Lower leg skin (tissue), 4 donors: ENCODE measurements at regions of chr7 and their contacts with region 1.

Region 1: GRCh38 chr7:4681886-4682620 is at the start of gene FOXK1:
- DNase-seq: peak; percentile 45 to 93
- H3K4me3 ChIP-seq: peak within 1 kb of the TSS; percentile 71
- CTCF ChIP-seq: no peak
- POLR2A ChIP-seq: no peak
- total RNA-seq, gene FOXK1: 22.0 to 41.3 (median 30.3) TPM

Region 2: GRCh38 chr7:3092468-3092867 is 1589.6 kb before region 1 on chr7:
- intact Hi-C with region 1: no loop called
- DNase-seq: peak in 1 of 2 donors; percentile 24
- H3K4me3 ChIP-seq: no peak overlapping the region
- CTCF ChIP-seq: no peak
- POLR2A ChIP-seq: no peak

Region 3: DNA sequence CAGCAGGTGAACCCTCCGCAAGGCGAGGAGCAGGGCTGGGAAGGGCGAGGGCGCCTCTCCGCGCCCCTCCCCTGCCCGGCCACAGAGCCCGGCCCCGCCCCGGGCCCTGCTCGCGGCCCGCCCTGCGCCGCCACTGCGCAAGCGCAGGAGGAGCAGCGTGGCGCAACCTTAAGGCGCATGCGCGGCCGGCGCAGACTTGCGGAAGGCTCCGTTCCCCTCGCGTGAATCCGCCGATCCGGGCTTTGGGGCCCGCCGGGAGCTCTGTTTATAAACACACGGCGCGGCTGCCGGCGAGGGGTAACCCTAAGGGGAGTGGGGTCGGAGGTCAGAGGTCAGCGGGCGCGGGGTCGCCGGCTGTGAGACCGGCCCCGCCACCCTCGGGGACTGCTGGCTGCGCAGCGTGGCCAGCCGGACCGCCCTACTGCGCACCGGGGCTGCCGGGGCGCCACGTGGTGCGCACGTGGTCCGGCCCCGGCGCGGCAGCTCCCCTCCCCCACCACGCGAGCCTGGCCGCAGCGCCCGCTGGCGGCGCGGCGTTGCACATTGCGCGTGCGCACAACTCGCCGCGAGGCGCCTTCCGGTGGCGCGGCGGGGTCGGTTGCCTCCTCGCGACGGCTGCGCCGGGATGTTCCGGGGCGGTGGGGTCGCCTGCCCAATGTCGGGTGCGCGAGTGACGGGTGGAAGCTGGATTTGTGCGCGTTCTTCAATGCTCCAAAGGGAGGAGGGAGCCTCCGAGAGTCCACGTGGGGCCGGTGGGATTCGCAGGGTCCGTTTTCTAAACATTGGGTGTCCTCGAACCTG is 40.2 kb before region 1 on chr7:
- intact Hi-C with region 1: loop called (anchors 5 kb)
- DNase-seq: peak; percentile 94 to 99
- H3K4me3 ChIP-seq: peak overlapping the region; percentile 43
- CTCF ChIP-seq: no peak
- POLR2A ChIP-seq: no peak

Region 4: DNA sequence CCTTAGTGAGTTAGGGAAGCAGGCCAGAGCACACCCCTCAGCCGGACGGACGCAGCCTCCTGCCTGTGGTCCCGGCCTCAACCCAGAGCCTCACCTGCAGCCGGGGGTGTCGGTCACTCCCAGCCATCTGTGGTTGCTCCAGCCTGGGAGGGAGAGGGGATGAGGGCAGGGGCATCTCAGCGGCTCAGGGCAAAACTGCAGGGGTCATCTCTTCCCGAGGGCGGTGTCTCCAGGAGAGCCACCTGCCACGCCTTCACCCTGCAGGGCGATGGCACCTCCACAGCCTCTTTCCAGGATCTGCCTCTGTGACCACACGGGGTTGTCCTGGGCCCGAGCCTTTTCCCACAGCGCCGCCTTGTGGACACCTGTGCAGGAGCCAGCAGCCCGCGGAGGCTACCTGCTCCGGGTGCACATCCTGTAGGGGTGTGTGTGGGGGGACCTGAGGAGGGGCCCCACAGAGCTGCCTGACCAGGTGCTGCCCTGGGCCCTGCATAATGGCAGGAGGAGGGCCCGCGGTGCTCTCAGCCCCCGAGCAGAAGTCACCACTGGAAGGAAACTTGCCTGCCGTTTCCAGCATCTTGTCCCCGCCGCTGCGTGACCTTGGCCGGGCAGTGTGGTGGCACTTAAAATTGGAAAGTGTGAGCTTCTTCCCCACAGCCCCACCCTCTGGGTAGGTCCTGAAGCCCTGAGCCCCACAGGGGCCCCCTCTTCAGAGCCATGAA is 71.8 kb after region 1 on chr7:
- intact Hi-C with region 1: loop called (anchors 5 kb)
- DNase-seq: peak; percentile 51 to 96
- H3K4me3 ChIP-seq: no peak overlapping the region
- CTCF ChIP-seq: peak in 1 of 3 donors; percentile 79
- POLR2A ChIP-seq: no peak